ENCODE measurements at regions of chr13 and their contacts with region 1.

Region 1: GRCh38 chr13:73835138-73835721 is 299.0 kb downstream of the KLF12 start:
- DNase-seq: peak; percentile 64
- ATAC-seq: peak; percentile 57
- H3K4me3 ChIP-seq: no peak overlapping the region
- H3K4me3 Mint-ChIP-seq: no peak overlapping the region
- H3K27ac ChIP-seq: no peak overlapping the region
- H3K27ac Mint-ChIP-seq: no peak overlapping the region
- H3K4me1 ChIP-seq: peaks cover 2 to 5% of the 10 kb centered on the region in 2 donors
- H3K4me1 Mint-ChIP-seq: peaks cover 23% of the 10 kb centered on the region
- H3K27me3 ChIP-seq: no peaks in the 10 kb centered on the region
- H3K27me3 Mint-ChIP-seq: no peaks in the 10 kb centered on the region
- CTCF ChIP-seq: peak; percentile 91

Region 2: GRCh38 chr13:73765651-73766384 is 69.4 kb before region 1 on chr13:
- CTCF ChIA-PET with region 1: no interaction called
- POLR2A ChIA-PET with region 1: no interaction called
- intact Hi-C with region 1: loop called (anchors 5 kb)
- DNase-seq: peak; percentile 65
- ATAC-seq: peak; percentile 79
- H3K4me3 ChIP-seq: peak overlapping the region in 4 of 5 experiments; percentile 0 to 43 (median 16)
- H3K4me3 Mint-ChIP-seq: peak overlapping the region; percentile 78
- H3K27ac ChIP-seq: peak overlapping the region; percentile 83 to 92
- H3K27ac Mint-ChIP-seq: peak overlapping the region; percentile 94
- H3K4me1 ChIP-seq: peaks cover 51 to 60% of the 10 kb centered on the region in 2 donors
- H3K4me1 Mint-ChIP-seq: peaks cover 71% of the 10 kb centered on the region
- H3K27me3 ChIP-seq: no peaks in the 10 kb centered on the region
- H3K27me3 Mint-ChIP-seq: no peaks in the 10 kb centered on the region
- CTCF ChIP-seq: no peak

Region 3: DNA sequence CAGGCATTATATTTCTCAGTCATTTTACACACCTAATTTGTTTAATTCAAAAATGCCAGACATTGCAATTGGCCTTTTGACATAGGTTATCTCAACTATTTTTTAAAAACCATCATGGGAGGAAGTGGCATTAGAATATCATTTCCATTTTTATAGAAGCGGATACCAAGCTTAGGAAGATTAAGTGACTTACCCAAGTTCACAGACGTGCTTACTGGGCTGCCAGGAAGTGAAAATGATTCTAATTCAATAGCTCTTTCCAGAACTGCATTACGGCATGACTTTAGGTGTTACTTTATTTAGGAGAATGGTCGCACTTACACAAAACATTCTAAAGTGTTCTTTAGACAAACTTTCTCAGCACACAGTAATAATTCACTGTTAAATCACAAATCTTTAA is 67.1 kb after region 1 on chr13:
- CTCF ChIA-PET with region 1: no interaction called
- POLR2A ChIA-PET with region 1: no interaction called
- intact Hi-C with region 1: no loop called
- DNase-seq: no peak
- ATAC-seq: no peak
- H3K4me3 ChIP-seq: no peak overlapping the region
- H3K4me3 Mint-ChIP-seq: peak overlapping the region; percentile 9
- H3K27ac ChIP-seq: no peak overlapping the region
- H3K27ac Mint-ChIP-seq: no peak overlapping the region
- H3K4me1 ChIP-seq: peaks cover 7 to 21% of the 10 kb centered on the region in 2 donors
- H3K4me1 Mint-ChIP-seq: peaks cover 47% of the 10 kb centered on the region
- H3K27me3 ChIP-seq: no peaks in the 10 kb centered on the region
- H3K27me3 Mint-ChIP-seq: no peaks in the 10 kb centered on the region
- CTCF ChIP-seq: no peak

Region 4: DNA sequence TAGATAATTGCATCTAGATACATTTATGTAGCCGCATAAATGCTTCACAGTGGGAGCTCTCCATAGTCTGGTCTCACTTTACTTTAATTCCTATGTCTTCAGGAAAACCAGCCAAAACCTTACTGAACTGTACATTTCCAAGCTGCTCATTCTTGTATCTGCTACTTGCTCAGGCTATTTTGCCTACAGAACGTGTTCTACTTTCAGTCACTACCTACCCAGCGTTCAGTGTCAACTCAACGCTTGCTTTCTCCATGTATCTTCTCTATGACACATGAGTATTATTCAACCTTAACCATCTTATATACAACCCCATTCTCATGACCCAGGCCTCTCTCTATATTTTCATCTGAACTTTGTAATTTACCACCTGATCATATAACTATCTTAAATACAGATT is 197.1 kb after region 1 on chr13:
- CTCF ChIA-PET with region 1: no interaction called
- POLR2A ChIA-PET with region 1: no interaction called
- intact Hi-C with region 1: loop called (anchors 5 kb)
- DNase-seq: no peak
- ATAC-seq: no peak
- H3K4me3 ChIP-seq: no peak overlapping the region
- H3K4me3 Mint-ChIP-seq: no peak overlapping the region
- H3K27ac ChIP-seq: no peak overlapping the region
- H3K27ac Mint-ChIP-seq: peak overlapping the region; percentile 16
- H3K4me1 ChIP-seq: peaks cover under 1 to 23% of the 10 kb centered on the region in 2 donors
- H3K4me1 Mint-ChIP-seq: peaks cover 54% of the 10 kb centered on the region
- H3K27me3 ChIP-seq: no peaks in the 10 kb centered on the region
- H3K27me3 Mint-ChIP-seq: no peaks in the 10 kb centered on the region
- CTCF ChIP-seq: no peak